ENCODE measurements at regions of chr11 and their contacts with region 1.

Region 1: DNA sequence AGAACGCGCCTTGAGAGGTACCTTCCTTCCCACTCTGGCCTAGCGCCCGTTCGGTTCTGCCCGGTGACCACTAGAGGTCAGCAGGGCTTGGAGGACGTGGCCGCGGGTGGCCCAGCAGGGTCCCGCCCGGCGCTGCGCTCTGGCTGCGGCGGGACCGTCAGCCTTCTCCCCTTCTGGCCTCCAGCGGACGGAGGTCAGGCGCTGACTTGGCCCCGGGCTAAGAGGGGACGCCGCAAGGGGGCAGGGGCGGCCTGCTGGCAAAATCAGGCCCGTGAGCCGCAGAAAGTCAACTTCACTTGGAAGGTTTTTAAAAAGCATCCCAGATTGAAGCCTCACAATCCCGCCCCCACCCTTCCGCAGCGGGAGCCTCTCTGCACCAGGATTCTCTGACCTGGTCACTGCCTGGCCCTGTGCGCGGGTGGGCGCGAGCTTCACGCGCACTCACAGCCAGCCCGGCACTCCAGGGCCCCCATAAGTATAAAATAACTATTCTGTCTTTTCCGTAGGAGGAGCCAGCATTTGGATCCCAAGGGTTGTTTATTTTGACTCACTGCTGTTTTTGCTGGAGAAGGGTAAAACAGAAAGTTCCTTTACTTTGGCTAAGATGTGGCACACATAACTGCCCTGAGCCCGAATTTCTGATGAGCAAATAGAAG is 23.2 kb upstream of the ZBTB16 start:
- DNase-seq: peak; percentile 61 to 72
- ATAC-seq: peak; percentile 81 to 95 (median 94)
- H3K4me3 ChIP-seq: no peak overlapping the region
- H3K4me3 Mint-ChIP-seq: peak overlapping the region; percentile 65
- H3K27ac ChIP-seq: no peak overlapping the region
- H3K27ac Mint-ChIP-seq: peak overlapping the region in 1 of 2 donors; percentile 33
- H3K4me1 ChIP-seq: peaks cover 11% of the 10 kb centered on the region
- H3K4me1 Mint-ChIP-seq: peaks cover 6 to 8% of the 10 kb centered on the region in 2 donors
- H3K27me3 ChIP-seq: no peaks in the 10 kb centered on the region
- H3K27me3 Mint-ChIP-seq: peaks cover 2 to 8% of the 10 kb centered on the region in 2 donors
- CTCF ChIP-seq: peak; percentile 79

Region 2: GRCh38 chr11:113906038-113906437 is 130.2 kb before region 1 on chr11:
- intact Hi-C with region 1: loop called (anchors 10 kb)
- DNase-seq: no peak
- ATAC-seq: no peak
- H3K4me3 ChIP-seq: no peak overlapping the region
- H3K4me3 Mint-ChIP-seq: no peak overlapping the region
- H3K27ac ChIP-seq: no peak overlapping the region
- H3K27ac Mint-ChIP-seq: no peak overlapping the region
- H3K4me1 ChIP-seq: no peaks in the 10 kb centered on the region
- H3K4me1 Mint-ChIP-seq: no peaks in the 10 kb centered on the region
- H3K27me3 ChIP-seq: no peaks in the 10 kb centered on the region
- H3K27me3 Mint-ChIP-seq: peaks cover 21 to 45% of the 10 kb centered on the region in 2 donors
- CTCF ChIP-seq: no peak

Measured in natural killer cell (primary cell).